Posterior cingulate gyrus (tissue), 11 donors: ENCODE measurements at regions of chr9 and their contacts with region 1.

Region 1: DNA sequence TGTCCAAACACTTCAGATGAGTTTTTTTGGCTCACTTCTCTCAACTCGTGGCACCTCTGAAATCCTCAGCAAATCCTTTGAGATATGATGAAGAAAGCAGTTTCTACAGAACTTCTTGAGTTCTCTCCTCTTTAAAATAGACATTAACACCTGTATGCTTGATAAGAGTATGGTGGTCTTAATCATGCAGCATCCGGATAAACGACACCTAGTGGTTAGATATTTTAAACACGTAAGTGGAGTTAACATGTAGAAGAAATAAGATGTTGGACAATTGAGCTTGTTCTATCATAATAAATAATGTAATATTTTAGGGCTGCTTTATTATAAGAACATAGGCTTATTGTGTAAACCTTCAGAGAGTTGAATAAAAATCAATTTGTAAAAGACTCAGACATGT is 324.8 kb downstream of the CYLC2 start:
- DNase-seq: no peak

Region 2: GRCh38 chr9:103245369-103245768 is 74.6 kb before region 1 on chr9:
- intact Hi-C with region 1: loop called (anchors 10 kb)
- DNase-seq: no peak